T-cell (primary cell): ENCODE measurements at regions of chr5 and their contacts with region 1.

Region 1: GRCh38 chr5:87400305-87400899 is 12.3 kb downstream of the CCNH start:
- DNase-seq: peak in 1 of 35 experiments; percentile 59
- ATAC-seq: peak; percentile 62 to 84 (median 76)
- H3K4me3 ChIP-seq: no peak overlapping the region
- H3K4me3 Mint-ChIP-seq: no peak overlapping the region
- H3K27ac ChIP-seq: no peak overlapping the region
- H3K27ac Mint-ChIP-seq: peak overlapping the region; percentile 81 to 84
- H3K4me1 ChIP-seq: no peaks in the 10 kb centered on the region
- H3K4me1 Mint-ChIP-seq: peaks cover 28 to 53% (median 38%) of the 10 kb centered on the region in 3 donors
- H3K27me3 ChIP-seq: no peaks in the 10 kb centered on the region
- H3K27me3 Mint-ChIP-seq: no peaks in the 10 kb centered on the region

Region 2: GRCh38 chr5:86880785-86881492 is 519.5 kb before region 1 on chr5:
- CTCF ChIA-PET with region 1: interaction called in 1 of 2 experiments, 10 read pairs
- POLR2A ChIA-PET with region 1: no interaction called
- DNase-seq: peak in 28 of 35 experiments; percentile 0 to 57 (median 5)
- ATAC-seq: peak; percentile 60 to 86 (median 77)
- H3K4me3 ChIP-seq: no peak overlapping the region
- H3K4me3 Mint-ChIP-seq: no peak overlapping the region
- H3K27ac ChIP-seq: no peak overlapping the region
- H3K27ac Mint-ChIP-seq: no peak overlapping the region
- H3K4me1 ChIP-seq: no peaks in the 10 kb centered on the region
- H3K4me1 Mint-ChIP-seq: no peaks in the 10 kb centered on the region
- H3K27me3 ChIP-seq: peaks cover 0 to 2% of the 10 kb centered on the region in 2 experiments
- H3K27me3 Mint-ChIP-seq: peaks cover 1 to 11% of the 10 kb centered on the region in 2 donors

Region 3: DNA sequence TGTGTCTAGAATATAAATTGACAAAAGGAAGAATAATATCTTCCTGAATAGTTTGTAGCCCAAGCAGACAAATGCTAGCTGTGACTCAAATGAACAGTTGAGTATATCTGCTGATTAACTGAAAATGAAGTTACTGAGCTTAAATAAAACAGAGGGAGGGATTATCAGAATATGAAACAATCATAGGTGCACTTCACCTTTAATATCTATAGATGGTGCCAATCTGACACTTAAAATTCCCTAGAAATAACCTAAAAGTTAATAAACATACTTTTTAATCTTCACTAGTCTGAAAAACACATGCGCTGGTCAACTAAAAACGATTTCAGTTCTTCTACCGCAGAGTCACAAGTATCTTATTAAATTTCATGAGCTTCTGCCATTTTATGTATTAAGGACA is 413.6 kb before region 1 on chr5:
- CTCF ChIA-PET with region 1: interaction called, 6 to 11 read pairs
- POLR2A ChIA-PET with region 1: interaction called in 1 of 2 experiments, 3 read pairs
- DNase-seq: peak in 1 of 35 experiments; percentile 6
- ATAC-seq: no peak
- H3K4me3 ChIP-seq: no peak overlapping the region
- H3K4me3 Mint-ChIP-seq: no peak overlapping the region
- H3K27ac ChIP-seq: no peak overlapping the region
- H3K27ac Mint-ChIP-seq: no peak overlapping the region
- H3K4me1 ChIP-seq: no peaks in the 10 kb centered on the region
- H3K4me1 Mint-ChIP-seq: no peaks in the 10 kb centered on the region
- H3K27me3 ChIP-seq: no peaks in the 10 kb centered on the region
- H3K27me3 Mint-ChIP-seq: no peaks in the 10 kb centered on the region

Region 4: DNA sequence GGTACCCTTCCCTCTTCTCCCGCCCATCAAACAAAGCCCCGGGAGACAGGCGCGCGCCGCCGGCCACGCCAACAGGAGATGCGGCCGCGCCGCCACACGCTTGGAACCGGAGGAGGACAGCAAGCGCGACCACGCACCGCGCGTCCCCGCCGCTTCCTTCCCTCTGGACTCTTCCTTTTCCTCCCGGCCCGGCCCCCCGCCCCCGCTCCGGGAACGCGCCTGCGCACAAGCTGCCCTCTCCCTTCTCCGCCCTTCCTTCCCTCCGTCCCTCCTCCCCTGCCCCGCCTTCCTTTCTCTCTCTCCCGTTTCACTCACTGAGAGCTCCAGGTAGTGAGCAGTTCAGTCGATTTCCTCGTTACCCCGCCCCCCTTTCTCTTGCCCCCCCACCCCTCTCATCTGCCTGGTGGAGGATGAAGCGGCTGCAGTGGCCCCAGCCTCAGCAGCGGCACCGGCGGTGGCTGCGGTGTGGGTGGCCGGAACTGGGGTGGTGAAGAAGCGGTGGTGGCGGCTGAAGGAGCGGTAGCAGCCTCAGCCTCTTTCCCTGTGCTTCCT is 132.8 kb before region 1 on chr5 and contains the start of gene RASA1:
- CTCF ChIA-PET with region 1: interaction called in 1 of 2 experiments, 4 read pairs
- POLR2A ChIA-PET with region 1: interaction called, 4 to 10 read pairs
- DNase-seq: peak in 23 of 35 experiments; percentile 32 to 82 (median 59)
- ATAC-seq: peak; percentile 61 to 71 (median 68)
- H3K4me3 ChIP-seq: peak within 1 kb of the TSS; percentile 96 to 97
- H3K4me3 Mint-ChIP-seq: peak within 1 kb of the TSS; percentile 98 to 99 (median 99)
- H3K27ac ChIP-seq: peak within 1 kb of the TSS; percentile 74
- H3K27ac Mint-ChIP-seq: peak within 1 kb of the TSS; percentile 96
- H3K4me1 ChIP-seq: peaks cover 8 to 26% of the 10 kb centered on the region in 2 experiments
- H3K4me1 Mint-ChIP-seq: peaks cover 24 to 43% (median 34%) of the 10 kb centered on the region in 3 donors
- H3K27me3 ChIP-seq: no peaks in the 10 kb centered on the region
- H3K27me3 Mint-ChIP-seq: peaks cover 0 to 2% of the 10 kb centered on the region in 2 donors
- total RNA-seq, gene RASA1: 23.9 to 32.5 (median 24.7) TPM

Region 5: DNA sequence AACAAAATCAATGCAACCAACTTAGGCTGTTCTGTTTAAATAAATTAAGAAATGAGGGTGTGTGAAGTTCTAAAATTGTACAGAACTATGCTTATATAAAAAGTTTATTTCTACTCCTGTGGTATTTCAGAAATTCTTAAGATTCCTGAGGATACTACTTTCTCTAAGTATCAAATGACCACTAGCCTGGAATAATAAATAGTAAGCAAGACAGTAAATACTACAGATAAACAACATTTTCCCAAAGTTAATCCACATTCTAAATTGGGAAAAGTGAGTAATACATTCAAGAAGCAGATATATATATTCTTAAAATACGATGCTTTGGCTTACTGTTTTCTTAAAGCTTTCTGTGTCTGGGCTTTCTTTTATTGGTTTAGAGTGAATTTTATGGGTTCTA is 17.2 kb before region 1 on chr5:
- CTCF ChIA-PET with region 1: interaction called, 7 to 20 read pairs
- POLR2A ChIA-PET with region 1: interaction called, 8 to 14 read pairs
- DNase-seq: no peak
- ATAC-seq: no peak
- H3K4me3 ChIP-seq: no peak overlapping the region
- H3K4me3 Mint-ChIP-seq: no peak overlapping the region
- H3K27ac ChIP-seq: no peak overlapping the region
- H3K27ac Mint-ChIP-seq: peak overlapping the region in 1 of 2 donors; percentile 39
- H3K4me1 ChIP-seq: no peaks in the 10 kb centered on the region
- H3K4me1 Mint-ChIP-seq: peaks cover 11 to 21% (median 13%) of the 10 kb centered on the region in 3 donors
- H3K27me3 ChIP-seq: no peaks in the 10 kb centered on the region
- H3K27me3 Mint-ChIP-seq: no peaks in the 10 kb centered on the region

Region 6: GRCh38 chr5:87390075-87390887 is 10.1 kb before region 1 on chr5:
- CTCF ChIA-PET with region 1: interaction called, 6 to 20 read pairs
- POLR2A ChIA-PET with region 1: interaction called, 8 to 14 read pairs
- DNase-seq: no peak
- ATAC-seq: peak in 1 of 4 experiments; percentile 6
- H3K4me3 ChIP-seq: no peak overlapping the region
- H3K4me3 Mint-ChIP-seq: no peak overlapping the region
- H3K27ac ChIP-seq: peak overlapping the region; percentile 1
- H3K27ac Mint-ChIP-seq: peak overlapping the region; percentile 16 to 56
- H3K4me1 ChIP-seq: no peaks in the 10 kb centered on the region
- H3K4me1 Mint-ChIP-seq: peaks cover 13 to 32% (median 25%) of the 10 kb centered on the region in 3 donors
- H3K27me3 ChIP-seq: no peaks in the 10 kb centered on the region
- H3K27me3 Mint-ChIP-seq: no peaks in the 10 kb centered on the region

Region 7: GRCh38 chr5:87412630-87413342 is 12.4 kb after region 1 on chr5 and contains the start of gene CCNH:
- CTCF ChIA-PET with region 1: interaction called, 5 to 25 read pairs
- POLR2A ChIA-PET with region 1: interaction called, 7 to 37 read pairs
- DNase-seq: peak; percentile 85 to 99 (median 97)
- ATAC-seq: peak; percentile 95 to 100 (median 98)
- H3K4me3 ChIP-seq: peak within 1 kb of the TSS; percentile 92 to 99
- H3K4me3 Mint-ChIP-seq: peak within 1 kb of the TSS; percentile 88 to 93 (median 89)
- H3K27ac ChIP-seq: peak within 1 kb of the TSS; percentile 97
- H3K27ac Mint-ChIP-seq: peak within 1 kb of the TSS; percentile 93 to 94
- H3K4me1 ChIP-seq: peaks cover 12 to 20% of the 10 kb centered on the region in 2 experiments
- H3K4me1 Mint-ChIP-seq: peaks cover 47 to 55% (median 49%) of the 10 kb centered on the region in 3 donors
- H3K27me3 ChIP-seq: no peaks in the 10 kb centered on the region
- H3K27me3 Mint-ChIP-seq: no peaks in the 10 kb centered on the region
- total RNA-seq, gene CCNH: 64.2 to 276 (median 72.9) TPM